ENCODE measurements at regions of chr1 and their contacts with region 1.

Region 1: GRCh38 chr1:26602378-26602959 is 72.9 kb downstream of the RPS6KA1 start:
- DNase-seq: peak; percentile 52 to 72 (median 70)
- H3K4me3 ChIP-seq: no peak overlapping the region
- H3K4me3 Mint-ChIP-seq: no peak overlapping the region
- H3K27ac ChIP-seq: no peak overlapping the region
- H3K27ac Mint-ChIP-seq: peak overlapping the region in 1 of 7 donors; percentile 35
- H3K4me1 ChIP-seq: peaks cover 10% of the 10 kb centered on the region
- H3K4me1 Mint-ChIP-seq: peaks cover 6 to 9% (median 7%) of the 10 kb centered on the region in 4 donors
- H3K27me3 ChIP-seq: no peaks in the 10 kb centered on the region
- H3K27me3 Mint-ChIP-seq: no peaks in the 10 kb centered on the region

Region 2: GRCh38 chr1:26500488-26501175 is 101.8 kb before region 1 on chr1:
- CTCF ChIA-PET with region 1: interaction called, 10 read pairs
- POLR2A ChIA-PET with region 1: interaction called, 3 read pairs
- intact Hi-C with region 1: no loop called
- DNase-seq: peak; percentile 85 to 87 (median 86)
- H3K4me3 ChIP-seq: peak overlapping the region; percentile 58 to 95
- H3K4me3 Mint-ChIP-seq: peak overlapping the region; percentile 83 to 90 (median 87)
- H3K27ac ChIP-seq: peak overlapping the region; percentile 87
- H3K27ac Mint-ChIP-seq: peak overlapping the region; percentile 85 to 95 (median 94)
- H3K4me1 ChIP-seq: peaks cover 16% of the 10 kb centered on the region
- H3K4me1 Mint-ChIP-seq: peaks cover 2 to 32% (median 12%) of the 10 kb centered on the region in 4 donors
- H3K27me3 ChIP-seq: no peaks in the 10 kb centered on the region
- H3K27me3 Mint-ChIP-seq: no peaks in the 10 kb centered on the region

Region 3: DNA sequence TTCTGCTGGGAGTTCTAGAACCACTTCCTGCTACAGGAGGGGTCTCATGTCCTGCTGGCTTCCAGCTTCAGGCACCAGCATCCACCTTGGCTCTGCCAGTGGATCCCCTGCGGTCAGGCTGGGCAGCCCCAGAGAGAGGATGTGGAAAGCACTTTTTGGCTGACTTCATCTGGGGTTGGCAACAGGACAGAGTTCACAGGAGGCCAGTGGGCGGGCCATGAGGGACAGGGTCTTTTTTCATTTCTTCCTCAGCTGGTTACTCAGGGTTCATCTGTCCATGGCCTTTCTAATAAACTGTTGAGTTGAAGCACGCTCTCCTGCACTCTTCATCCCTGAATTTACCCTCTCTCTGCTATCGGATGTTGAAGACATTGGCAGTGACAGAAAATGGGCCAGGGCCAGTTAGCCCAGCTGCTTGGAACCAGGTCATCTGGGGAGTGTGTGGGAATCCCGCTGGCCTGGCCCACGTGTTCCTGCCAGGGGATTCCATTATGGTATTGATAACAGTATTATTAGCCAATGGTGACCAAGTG is 27.7 kb before region 1 on chr1:
- CTCF ChIA-PET with region 1: no interaction called
- POLR2A ChIA-PET with region 1: no interaction called
- intact Hi-C with region 1: no loop called
- DNase-seq: no peak
- H3K4me3 ChIP-seq: no peak overlapping the region
- H3K4me3 Mint-ChIP-seq: no peak overlapping the region
- H3K27ac ChIP-seq: no peak overlapping the region
- H3K27ac Mint-ChIP-seq: no peak overlapping the region
- H3K4me1 ChIP-seq: no peaks in the 10 kb centered on the region
- H3K4me1 Mint-ChIP-seq: peaks cover 6 to 17% (median 11%) of the 10 kb centered on the region in 4 donors
- H3K27me3 ChIP-seq: no peaks in the 10 kb centered on the region
- H3K27me3 Mint-ChIP-seq: no peaks in the 10 kb centered on the region

Region 4: GRCh38 chr1:26677306-26678115 is 75.0 kb after region 1 on chr1:
- CTCF ChIA-PET with region 1: interaction called, 33 read pairs
- POLR2A ChIA-PET with region 1: interaction called, 8 read pairs
- intact Hi-C with region 1: loop called (anchors 1 kb)
- DNase-seq: peak; percentile 48 to 68 (median 54)
- H3K4me3 ChIP-seq: no peak overlapping the region
- H3K4me3 Mint-ChIP-seq: peak overlapping the region in 7 of 8 donors; percentile 36 to 82 (median 77)
- H3K27ac ChIP-seq: peak overlapping the region; percentile 5
- H3K27ac Mint-ChIP-seq: peak overlapping the region; percentile 24 to 89 (median 74)
- H3K4me1 ChIP-seq: peaks cover 20% of the 10 kb centered on the region
- H3K4me1 Mint-ChIP-seq: peaks cover 11 to 23% (median 14%) of the 10 kb centered on the region in 4 donors
- H3K27me3 ChIP-seq: no peaks in the 10 kb centered on the region
- H3K27me3 Mint-ChIP-seq: no peaks in the 10 kb centered on the region

Region 5: DNA sequence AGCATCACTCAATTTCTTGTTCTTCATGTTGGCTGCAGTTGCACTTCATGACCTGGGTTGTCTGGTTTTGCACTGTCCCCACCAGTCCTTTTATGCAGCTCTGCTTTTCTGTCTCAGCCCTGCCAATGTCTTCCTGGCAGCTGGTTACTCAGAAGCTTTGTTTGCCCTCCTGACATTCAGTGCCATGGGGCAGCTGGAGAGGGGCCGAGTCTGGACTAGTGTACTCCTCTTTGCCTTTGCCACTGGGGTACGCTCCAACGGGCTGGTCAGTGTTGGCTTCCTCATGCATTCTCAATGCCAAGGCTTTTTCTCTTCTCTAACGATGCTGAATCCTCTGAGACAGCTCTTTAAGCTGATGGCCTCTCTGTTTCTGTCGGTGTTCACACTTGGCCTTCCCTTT is 191.9 kb after region 1 on chr1:
- CTCF ChIA-PET with region 1: interaction called, 352 read pairs
- POLR2A ChIA-PET with region 1: interaction called, 104 read pairs
- intact Hi-C with region 1: loop called (anchors 1 kb)
- DNase-seq: no peak
- H3K4me3 ChIP-seq: no peak overlapping the region
- H3K4me3 Mint-ChIP-seq: no peak overlapping the region
- H3K27ac ChIP-seq: no peak overlapping the region
- H3K27ac Mint-ChIP-seq: peak overlapping the region in 4 of 7 donors; percentile 37 to 91 (median 55)
- H3K4me1 ChIP-seq: peaks cover 29% of the 10 kb centered on the region
- H3K4me1 Mint-ChIP-seq: peaks cover 23 to 37% (median 33%) of the 10 kb centered on the region in 4 donors
- H3K27me3 ChIP-seq: no peaks in the 10 kb centered on the region
- H3K27me3 Mint-ChIP-seq: no peaks in the 10 kb centered on the region

Region 6: DNA sequence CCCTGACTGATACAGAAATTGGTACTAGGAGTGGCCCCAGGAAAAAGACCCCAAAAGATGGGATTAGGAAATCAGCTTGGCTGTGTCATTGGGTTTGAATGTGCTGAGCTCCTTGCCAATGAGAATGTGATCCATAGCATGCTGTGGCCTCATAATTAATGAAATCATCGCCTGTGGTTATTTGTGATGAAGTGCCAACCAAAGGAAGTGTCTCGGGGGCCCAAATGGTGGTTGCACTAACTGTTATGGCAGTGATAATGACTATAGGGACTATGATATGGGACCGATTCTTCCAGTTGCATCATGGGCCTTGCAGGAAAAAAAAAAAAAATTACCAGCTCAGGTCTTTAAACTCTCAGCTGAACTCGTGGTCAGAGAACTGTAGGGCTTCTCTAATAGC is 208.6 kb after region 1 on chr1:
- CTCF ChIA-PET with region 1: interaction called, 43 read pairs
- POLR2A ChIA-PET with region 1: no interaction called
- intact Hi-C with region 1: no loop called
- DNase-seq: no peak
- H3K4me3 ChIP-seq: no peak overlapping the region
- H3K4me3 Mint-ChIP-seq: peak overlapping the region in 1 of 8 donors; percentile 39
- H3K27ac ChIP-seq: no peak overlapping the region
- H3K27ac Mint-ChIP-seq: peak overlapping the region; percentile 37 to 96 (median 80)
- H3K4me1 ChIP-seq: no peaks in the 10 kb centered on the region
- H3K4me1 Mint-ChIP-seq: peaks cover 3 to 12% (median 8%) of the 10 kb centered on the region in 4 donors
- H3K27me3 ChIP-seq: no peaks in the 10 kb centered on the region
- H3K27me3 Mint-ChIP-seq: no peaks in the 10 kb centered on the region

Region 7: GRCh38 chr1:26853156-26853555 is 250.7 kb after region 1 on chr1:
- CTCF ChIA-PET with region 1: interaction called, 3 read pairs
- POLR2A ChIA-PET with region 1: no interaction called
- intact Hi-C with region 1: loop called (anchors 1 kb)
- DNase-seq: peak; percentile 64 to 75 (median 69)
- H3K4me3 ChIP-seq: no peak overlapping the region
- H3K4me3 Mint-ChIP-seq: no peak overlapping the region
- H3K27ac ChIP-seq: no peak overlapping the region
- H3K27ac Mint-ChIP-seq: peak overlapping the region in 2 of 7 donors; percentile 11 to 52
- H3K4me1 ChIP-seq: no peaks in the 10 kb centered on the region
- H3K4me1 Mint-ChIP-seq: peaks cover 1 to 9% (median 4%) of the 10 kb centered on the region in 4 donors
- H3K27me3 ChIP-seq: no peaks in the 10 kb centered on the region
- H3K27me3 Mint-ChIP-seq: no peaks in the 10 kb centered on the region

Region 8: GRCh38 chr1:26882696-26883463 is 280.4 kb after region 1 on chr1:
- CTCF ChIA-PET with region 1: interaction called, 22 read pairs
- POLR2A ChIA-PET with region 1: no interaction called
- intact Hi-C with region 1: loop called (anchors 1 kb)
- DNase-seq: no peak
- H3K4me3 ChIP-seq: no peak overlapping the region
- H3K4me3 Mint-ChIP-seq: no peak overlapping the region
- H3K27ac ChIP-seq: no peak overlapping the region
- H3K27ac Mint-ChIP-seq: peak overlapping the region in 4 of 7 donors; percentile 7 to 82 (median 22)
- H3K4me1 ChIP-seq: peaks cover 6% of the 10 kb centered on the region
- H3K4me1 Mint-ChIP-seq: peaks cover 6 to 14% (median 10%) of the 10 kb centered on the region in 4 donors
- H3K27me3 ChIP-seq: no peaks in the 10 kb centered on the region
- H3K27me3 Mint-ChIP-seq: no peaks in the 10 kb centered on the region